Dendritic cell treated with granulocyte-macrophage colony-stimulating factor and Interleukin-4, amounts not matched to agents 40 ng/mL and 50 ng/mL, for 4 days (primary cell): ENCODE measurements at regions of chr2 and their contacts with region 1.

Region 1: GRCh38 chr2:60794277-60794863 is 38.3 kb downstream of the PAPOLG start:
- H3K4me3 Mint-ChIP-seq: no peak overlapping the region
- H3K27ac Mint-ChIP-seq: no peak overlapping the region
- H3K4me1 Mint-ChIP-seq: peaks cover 25% of the 10 kb centered on the region
- H3K27me3 Mint-ChIP-seq: no peaks in the 10 kb centered on the region

Region 2: GRCh38 chr2:60707750-60708371 is 86.5 kb before region 1 on chr2:
- intact Hi-C with region 1: loop called (anchors 2 kb)
- H3K4me3 Mint-ChIP-seq: no peak overlapping the region
- H3K27ac Mint-ChIP-seq: peak overlapping the region; percentile 80
- H3K4me1 Mint-ChIP-seq: peaks cover 22% of the 10 kb centered on the region
- H3K27me3 Mint-ChIP-seq: no peaks in the 10 kb centered on the region

Region 3: GRCh38 chr2:60834270-60834962 is 40.0 kb after region 1 on chr2:
- intact Hi-C with region 1: loop called (anchors 5 kb)
- H3K4me3 Mint-ChIP-seq: peak overlapping the region; percentile 1
- H3K27ac Mint-ChIP-seq: peak overlapping the region; percentile 89
- H3K4me1 Mint-ChIP-seq: peaks cover 55% of the 10 kb centered on the region
- H3K27me3 Mint-ChIP-seq: no peaks in the 10 kb centered on the region

Region 4: DNA sequence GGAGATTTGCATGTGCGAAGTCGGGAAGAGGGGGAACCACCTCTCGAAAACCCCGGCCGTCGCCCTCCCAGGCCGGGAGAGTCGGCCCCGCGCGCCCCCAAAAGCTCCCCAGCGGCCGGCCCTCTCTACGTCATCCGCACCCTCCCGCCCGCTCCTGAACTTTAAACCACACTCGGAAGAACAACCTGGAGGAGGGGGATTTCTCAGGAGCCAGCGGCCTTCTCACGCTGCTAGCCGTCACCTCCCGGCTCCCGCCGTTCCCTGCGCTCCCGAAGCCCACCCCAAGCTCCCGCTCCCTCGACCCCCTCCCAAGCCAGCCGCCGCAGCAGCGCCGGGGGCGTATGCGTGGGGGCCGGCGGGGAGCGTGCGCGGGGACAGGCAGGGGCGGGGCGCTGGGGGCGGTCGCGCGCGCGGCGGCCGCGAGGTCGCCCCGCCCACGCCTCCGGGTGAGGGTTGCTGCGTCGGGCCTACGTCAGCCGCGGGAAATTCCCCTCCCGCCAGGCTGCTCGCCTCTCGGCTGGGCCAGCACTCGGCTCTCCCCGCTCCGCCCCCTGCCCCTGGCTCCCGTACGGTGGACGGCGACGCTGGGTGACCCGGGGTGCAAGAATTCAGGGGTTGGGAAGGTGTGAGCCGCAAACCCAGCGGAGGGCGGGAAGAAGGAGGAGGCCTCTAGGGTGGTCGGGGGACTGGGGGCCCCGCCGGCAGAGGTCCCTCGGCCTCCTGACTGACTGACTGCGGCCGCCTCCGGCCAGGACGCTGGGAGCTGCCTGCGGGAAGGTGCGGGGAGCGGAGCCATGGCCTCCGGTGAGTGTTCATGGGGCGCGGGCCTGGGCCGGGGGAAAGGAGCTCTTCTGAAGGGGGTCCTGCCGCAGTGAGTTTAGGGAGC is 86.9 kb after region 1 on chr2 and contains the start of gene REL:
- intact Hi-C with region 1: loop called (anchors 1 kb)
- H3K4me3 Mint-ChIP-seq: peak within 1 kb of the TSS; percentile 99
- H3K27ac Mint-ChIP-seq: peak within 1 kb of the TSS; percentile 99
- H3K4me1 Mint-ChIP-seq: peaks cover 22% of the 10 kb centered on the region
- H3K27me3 Mint-ChIP-seq: no peaks in the 10 kb centered on the region

Region 5: GRCh38 chr2:60998628-60999545 is 204.5 kb after region 1 on chr2:
- intact Hi-C with region 1: loop called (anchors 2 kb)
- H3K4me3 Mint-ChIP-seq: no peak overlapping the region
- H3K27ac Mint-ChIP-seq: no peak overlapping the region
- H3K4me1 Mint-ChIP-seq: peaks cover 14% of the 10 kb centered on the region
- H3K27me3 Mint-ChIP-seq: no peaks in the 10 kb centered on the region